Pancreas (tissue), 10 donors: ENCODE measurements at regions of chr11 and their contacts with region 1.

Region 1: GRCh38 chr11:63838678-63839507 is at the start of gene MARK2:
- DNase-seq: peak; percentile 97 to 100 (median 99)
- ATAC-seq: peak; percentile 82 to 92 (median 88)
- H3K4me3 ChIP-seq: peak within 1 kb of the TSS; percentile 58 to 89 (median 79)
- H3K27ac ChIP-seq: peak within 1 kb of the TSS; percentile 59 to 85 (median 72)
- H3K4me1 ChIP-seq: peaks cover 19 to 44% (median 37%) of the 10 kb centered on the region in 3 donors
- H3K27me3 ChIP-seq: no peaks in the 10 kb centered on the region
- CTCF ChIP-seq: no peak
- total RNA-seq, gene MARK2: 19.0 to 30.8 (median 21.5) TPM

Region 2: GRCh38 chr11:63663809-63664208 is 175.1 kb before region 1 on chr11:
- intact Hi-C with region 1: no loop called
- DNase-seq: no peak
- ATAC-seq: no peak
- H3K4me3 ChIP-seq: no peak overlapping the region
- H3K27ac ChIP-seq: no peak overlapping the region
- H3K4me1 ChIP-seq: peaks cover 0 to 15% (median 3%) of the 10 kb centered on the region in 3 donors
- H3K27me3 ChIP-seq: no peaks in the 10 kb centered on the region
- CTCF ChIP-seq: no peak

Region 3: GRCh38 chr11:63768237-63769043 is 70.5 kb before region 1 on chr11 and contains the start of gene ZFTA:
- intact Hi-C with region 1: loop called in 1 of 3 experiments (anchors 10 kb)
- DNase-seq: peak; percentile 63 to 86 (median 74)
- ATAC-seq: peak; percentile 32 to 54 (median 38)
- H3K4me3 ChIP-seq: peak within 1 kb of the TSS; percentile 63 to 94 (median 86)
- H3K27ac ChIP-seq: peak within 1 kb of the TSS; percentile 35 to 69 (median 58)
- H3K4me1 ChIP-seq: peaks cover 0 to 3% (median 0%) of the 10 kb centered on the region in 3 donors
- H3K27me3 ChIP-seq: no peaks in the 10 kb centered on the region
- CTCF ChIP-seq: peak; percentile 14 to 62 (median 32)
- total RNA-seq, gene ZFTA: 4.3 to 11.3 (median 6.2) TPM

Region 4: GRCh38 chr11:63871962-63872799 is 33.3 kb after region 1 on chr11:
- intact Hi-C with region 1: loop called in 1 of 3 experiments (anchors 5 kb)
- DNase-seq: peak; percentile 59 to 92 (median 87)
- ATAC-seq: peak; percentile 91 to 95 (median 94)
- H3K4me3 ChIP-seq: no peak overlapping the region
- H3K27ac ChIP-seq: peak overlapping the region; percentile 18 to 78 (median 59)
- H3K4me1 ChIP-seq: peaks cover 47 to 60% (median 54%) of the 10 kb centered on the region in 3 donors
- H3K27me3 ChIP-seq: no peaks in the 10 kb centered on the region
- CTCF ChIP-seq: peak; percentile 9 to 39 (median 28)

Region 5: DNA sequence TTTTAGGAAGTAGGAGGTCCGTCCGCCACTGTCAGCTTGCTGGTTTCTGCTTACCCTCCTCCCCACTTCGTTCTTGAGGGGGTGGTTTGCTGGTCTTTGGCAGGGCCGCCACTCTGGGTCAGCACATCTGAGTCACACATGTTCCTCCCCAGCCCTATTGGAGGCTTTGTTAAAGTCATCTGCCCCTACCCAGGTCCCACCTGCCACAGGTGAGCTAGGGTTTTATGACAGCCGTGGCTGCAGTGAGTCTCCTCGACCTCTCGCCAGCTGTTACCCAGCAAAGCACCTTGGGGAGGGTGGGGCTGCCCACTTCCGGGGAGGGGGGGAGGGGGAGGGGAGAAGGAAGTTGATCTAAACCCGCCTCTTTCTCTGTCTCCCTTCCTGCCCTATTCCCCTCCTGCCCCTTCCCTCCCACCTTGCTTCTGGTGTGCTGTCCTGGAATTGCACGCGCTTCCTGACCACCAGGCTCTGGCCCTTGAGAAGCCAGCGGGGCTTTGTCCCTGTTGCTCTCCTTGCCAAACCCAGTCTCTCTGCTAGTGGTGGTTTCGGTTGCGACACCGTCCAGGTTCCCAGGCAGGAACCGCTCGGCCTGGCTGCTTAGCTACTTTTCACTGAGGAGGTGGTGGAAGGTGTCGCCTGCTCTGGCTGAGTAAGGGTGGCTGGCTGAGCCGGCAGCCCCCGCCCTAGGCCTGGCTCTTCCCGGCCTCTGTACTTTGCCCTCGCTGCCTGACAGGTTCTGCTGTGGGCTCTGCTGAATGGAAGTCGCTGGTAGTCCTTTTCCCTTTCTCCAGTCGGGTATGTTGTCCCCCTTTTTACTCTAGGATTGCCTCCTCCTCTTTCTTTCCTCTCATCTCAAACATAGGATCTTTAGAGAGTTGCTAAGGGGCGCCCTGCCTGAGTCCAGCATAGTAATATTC is 49.5 kb after region 1 on chr11:
- intact Hi-C with region 1: loop called in 1 of 3 experiments (anchors 5 kb)
- DNase-seq: peak; percentile 75 to 86 (median 82)
- ATAC-seq: peak; percentile 86 to 90 (median 88)
- H3K4me3 ChIP-seq: peak overlapping the region; percentile 19 to 46 (median 26)
- H3K27ac ChIP-seq: peak overlapping the region; percentile 63 to 92 (median 79)
- H3K4me1 ChIP-seq: peaks cover 30 to 39% (median 38%) of the 10 kb centered on the region in 3 donors
- H3K27me3 ChIP-seq: no peaks in the 10 kb centered on the region
- CTCF ChIP-seq: no peak

Region 6: GRCh38 chr11:63906585-63906984 is 67.7 kb after region 1 on chr11:
- intact Hi-C with region 1: loop called in 1 of 3 experiments (anchors 10 kb)
- DNase-seq: no peak
- ATAC-seq: peak in 2 of 4 donors; percentile 19 to 32
- H3K4me3 ChIP-seq: no peak overlapping the region
- H3K27ac ChIP-seq: no peak overlapping the region
- H3K4me1 ChIP-seq: no peaks in the 10 kb centered on the region
- H3K27me3 ChIP-seq: no peaks in the 10 kb centered on the region
- CTCF ChIP-seq: peak in 1 of 4 donors; percentile 12

Region 7: DNA sequence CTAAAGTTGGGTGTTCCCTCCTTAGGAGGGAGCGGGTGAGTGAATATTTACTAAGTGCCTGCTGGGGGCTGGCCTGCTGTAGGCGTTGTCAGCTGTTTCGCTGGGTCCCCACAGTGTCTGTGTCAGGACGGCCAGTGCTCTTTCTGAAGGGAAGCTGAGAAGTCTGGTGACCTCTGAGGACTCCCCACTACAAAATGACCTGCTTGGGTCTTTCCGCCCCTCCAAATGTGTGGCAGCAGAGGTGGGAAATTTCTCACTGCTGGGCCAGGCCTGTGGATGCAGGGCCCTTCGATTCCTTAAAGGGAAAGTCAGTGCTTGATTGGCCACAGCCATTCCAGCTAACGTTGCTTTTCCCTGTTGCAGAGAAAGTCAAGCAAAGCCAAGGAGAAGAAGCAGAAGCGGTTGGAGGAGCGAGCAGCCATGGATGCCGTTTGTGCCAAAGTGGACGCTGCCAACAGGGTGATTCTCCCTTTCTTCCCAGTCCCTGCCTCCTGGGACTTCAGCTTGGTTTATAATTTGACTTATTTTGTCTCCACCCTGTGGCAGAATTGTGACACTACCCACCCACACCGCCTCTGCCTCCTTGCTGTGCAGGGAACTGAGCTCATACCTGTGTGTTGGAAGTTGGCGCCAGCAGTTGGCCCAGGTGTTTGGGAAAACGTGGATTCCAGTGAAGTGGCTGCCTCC is 106.7 kb after region 1 on chr11:
- intact Hi-C with region 1: loop called in 2 of 3 experiments (anchors 5 kb)
- DNase-seq: peak; percentile 70 to 89 (median 78)
- ATAC-seq: peak; percentile 96 to 99 (median 98)
- H3K4me3 ChIP-seq: peak overlapping the region in 1 of 4 donors; percentile 7
- H3K27ac ChIP-seq: peak overlapping the region in 2 of 4 donors; percentile 5 to 9
- H3K4me1 ChIP-seq: peaks cover 0 to 8% (median 0%) of the 10 kb centered on the region in 3 donors
- H3K27me3 ChIP-seq: no peaks in the 10 kb centered on the region
- CTCF ChIP-seq: peak; percentile 47 to 81 (median 73)